Activated T-helper 1 cell treated with anti-CD3 and anti-CD28 coated beads, Interleukin-12 subunit alpha, Interleukin-12 subunit beta, Interleukin-2, Interleukin-4 antibody, amounts not matched to agents 30 ng/mL and 10 ng/mL and 1 ng/mL, durations not matched to agents 14 hours and 24 hours and 36 hours (primary cell): ENCODE measurements at regions of chr13 and their contacts with region 1.

Region 1: DNA sequence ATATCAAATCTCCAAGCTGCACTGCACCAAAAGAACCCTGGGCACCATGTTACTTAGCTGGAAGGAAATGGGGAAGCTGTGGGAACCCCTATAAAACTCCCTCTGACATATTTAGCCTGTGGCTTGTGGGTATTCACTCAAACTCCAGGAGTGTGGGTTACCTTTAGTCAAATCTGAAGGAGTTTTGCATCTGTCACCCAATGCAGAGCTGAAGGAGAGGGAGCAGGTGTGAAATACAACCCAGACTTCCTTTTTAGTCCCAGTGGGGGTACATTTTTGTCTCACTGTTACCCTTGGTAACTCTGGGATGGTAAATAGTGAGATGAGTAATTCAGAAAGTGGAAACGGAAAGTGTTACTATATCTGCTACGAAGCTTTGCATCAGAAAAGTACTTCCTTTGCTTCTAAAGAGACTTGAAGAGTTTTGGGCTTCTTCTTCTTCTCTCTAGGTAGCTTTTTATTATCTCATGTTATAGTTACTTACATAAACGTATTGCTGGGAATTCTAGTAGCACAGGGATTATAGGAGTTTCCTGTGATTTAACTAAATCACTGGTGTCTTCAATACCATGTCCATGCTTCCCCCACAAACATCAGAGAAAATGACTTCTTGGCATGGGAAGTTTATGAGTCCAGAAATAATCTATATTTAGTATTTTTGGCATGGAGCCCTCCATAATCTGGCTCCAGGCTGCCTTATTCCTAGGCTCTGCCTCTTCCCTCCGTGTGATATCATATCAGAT is 105.9 kb downstream of the AKAP11 start:
- DNase-seq: peak; percentile 68
- H3K4me3 Mint-ChIP-seq: peak overlapping the region; percentile 38
- H3K27ac Mint-ChIP-seq: peak overlapping the region; percentile 89
- H3K4me1 Mint-ChIP-seq: peaks cover 82% of the 10 kb centered on the region
- H3K27me3 Mint-ChIP-seq: no peaks in the 10 kb centered on the region

Region 2: GRCh38 chr13:42354241-42355091 is 23.3 kb before region 1 on chr13:
- intact Hi-C with region 1: loop called (anchors 1 kb)
- DNase-seq: no peak
- H3K4me3 Mint-ChIP-seq: peak overlapping the region; percentile 72
- H3K27ac Mint-ChIP-seq: peak overlapping the region; percentile 99
- H3K4me1 Mint-ChIP-seq: peaks cover 68% of the 10 kb centered on the region
- H3K27me3 Mint-ChIP-seq: peaks cover 1% of the 10 kb centered on the region

Region 3: GRCh38 chr13:42420304-42420703 is 42.5 kb after region 1 on chr13:
- intact Hi-C with region 1: loop called (anchors 1 kb)
- DNase-seq: no peak
- H3K4me3 Mint-ChIP-seq: peak overlapping the region; percentile 54
- H3K27ac Mint-ChIP-seq: peak overlapping the region; percentile 83
- H3K4me1 Mint-ChIP-seq: peaks cover 43% of the 10 kb centered on the region
- H3K27me3 Mint-ChIP-seq: peaks cover 2% of the 10 kb centered on the region

Region 4: DNA sequence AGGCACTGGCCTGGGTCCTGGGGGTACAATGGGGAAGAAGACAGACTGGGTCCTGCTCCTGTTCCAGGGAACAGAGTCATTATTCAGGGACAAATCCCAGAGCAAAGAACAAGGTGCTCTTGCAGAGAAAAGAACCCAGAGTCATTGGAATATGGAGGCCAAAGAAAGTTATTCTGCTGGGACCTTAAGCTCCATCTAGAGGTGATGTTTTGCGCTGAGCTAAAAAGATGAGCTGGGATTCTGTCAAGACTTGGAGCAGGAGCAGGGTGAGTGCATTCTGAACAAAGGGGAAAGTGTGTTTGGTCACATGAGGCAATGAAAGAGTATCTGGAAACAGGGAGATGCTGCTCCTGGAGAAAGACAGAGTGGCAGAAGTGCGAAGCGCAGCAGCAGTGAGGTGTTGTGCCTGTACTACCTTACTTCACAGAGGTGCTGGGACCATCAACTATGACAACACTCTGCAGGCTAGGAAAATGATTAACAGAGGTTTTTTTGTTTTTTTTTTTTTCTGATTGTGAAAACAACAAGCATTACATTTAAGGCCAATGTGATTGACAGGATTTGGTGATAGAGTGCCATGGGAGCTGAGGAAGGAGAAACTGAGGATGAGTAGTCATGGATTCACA is 100.8 kb after region 1 on chr13:
- intact Hi-C with region 1: loop called (anchors 1 kb)
- DNase-seq: no peak
- H3K4me3 Mint-ChIP-seq: no peak overlapping the region
- H3K27ac Mint-ChIP-seq: no peak overlapping the region
- H3K4me1 Mint-ChIP-seq: peaks cover 24% of the 10 kb centered on the region
- H3K27me3 Mint-ChIP-seq: no peaks in the 10 kb centered on the region

Region 5: GRCh38 chr13:42574435-42575311 is 196.9 kb after region 1 on chr13:
- intact Hi-C with region 1: loop called (anchors 2 kb)
- DNase-seq: no peak
- H3K4me3 Mint-ChIP-seq: peak overlapping the region; percentile 74
- H3K27ac Mint-ChIP-seq: peak overlapping the region; percentile 64
- H3K4me1 Mint-ChIP-seq: peaks cover 19% of the 10 kb centered on the region
- H3K27me3 Mint-ChIP-seq: peaks cover 59% of the 10 kb centered on the region